Prostate gland (tissue), 2 donors: ENCODE measurements at regions of chr16 and their contacts with region 1.

Region 1: GRCh38 chr16:22190776-22191531 is 15.1 kb upstream of the EEF2K start:
- DNase-seq: peak; percentile 100
- H3K4me3 ChIP-seq: peak overlapping the region; percentile 34 to 68
- H3K27ac ChIP-seq: peak overlapping the region; percentile 96 to 98
- H3K4me1 ChIP-seq: peaks cover 12% of the 10 kb centered on the region
- H3K27me3 ChIP-seq: no peaks in the 10 kb centered on the region
- CTCF ChIP-seq: no peak
- POLR2A ChIP-seq: peak; percentile 95

Region 2: GRCh38 chr16:21523411-21524067 is 667.4 kb before region 1 on chr16:
- intact Hi-C with region 1: loop called (anchors 10 kb)
- DNase-seq: no peak
- H3K4me3 ChIP-seq: no peak overlapping the region
- H3K27ac ChIP-seq: no peak overlapping the region
- H3K4me1 ChIP-seq: no peaks in the 10 kb centered on the region
- H3K27me3 ChIP-seq: no peaks in the 10 kb centered on the region
- CTCF ChIP-seq: no peak
- POLR2A ChIP-seq: no peak

Region 3: GRCh38 chr16:22077700-22078313 is 113.1 kb before region 1 on chr16:
- intact Hi-C with region 1: loop called (anchors 2 kb)
- DNase-seq: peak; percentile 50
- H3K4me3 ChIP-seq: no peak overlapping the region
- H3K27ac ChIP-seq: no peak overlapping the region
- H3K4me1 ChIP-seq: no peaks in the 10 kb centered on the region
- H3K27me3 ChIP-seq: no peaks in the 10 kb centered on the region
- CTCF ChIP-seq: peak; percentile 33 to 84 (median 72)
- POLR2A ChIP-seq: no peak

Region 4: DNA sequence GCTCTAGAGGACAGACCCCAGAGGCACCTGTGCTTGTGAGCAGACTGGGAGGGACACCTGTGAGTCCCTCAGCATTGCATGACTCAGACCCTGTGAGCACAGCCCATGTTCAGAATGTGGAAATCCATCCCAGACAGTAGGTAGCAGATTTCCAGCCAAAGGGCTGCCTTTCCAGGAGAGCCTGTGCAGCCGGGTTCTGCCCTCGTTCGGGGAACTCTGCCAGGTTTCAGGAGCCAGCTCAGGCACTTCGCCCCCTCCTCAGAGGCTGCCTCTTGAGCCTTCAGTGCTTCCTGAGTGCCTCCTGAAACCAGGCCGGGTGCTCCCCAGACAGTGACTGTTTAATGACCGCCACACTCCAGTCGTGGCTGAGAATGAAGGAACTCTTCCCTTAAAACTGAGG is 51.9 kb before region 1 on chr16:
- intact Hi-C with region 1: no loop called
- DNase-seq: no peak
- H3K4me3 ChIP-seq: no peak overlapping the region
- H3K27ac ChIP-seq: no peak overlapping the region
- H3K4me1 ChIP-seq: no peaks in the 10 kb centered on the region
- H3K27me3 ChIP-seq: no peaks in the 10 kb centered on the region
- CTCF ChIP-seq: no peak
- POLR2A ChIP-seq: no peak

Region 5: GRCh38 chr16:22297114-22297878 is 106.3 kb after region 1 on chr16 and contains the start of gene POLR3E:
- intact Hi-C with region 1: loop called (anchors 2 kb)
- DNase-seq: peak; percentile 99
- H3K4me3 ChIP-seq: peak within 1 kb of the TSS; percentile 78 to 91
- H3K27ac ChIP-seq: peak within 1 kb of the TSS; percentile 92 to 96
- H3K4me1 ChIP-seq: peaks cover 5% of the 10 kb centered on the region
- H3K27me3 ChIP-seq: no peaks in the 10 kb centered on the region
- CTCF ChIP-seq: peak; percentile 95 to 100 (median 99)
- POLR2A ChIP-seq: peak; percentile 73
- total RNA-seq, gene POLR3E: 52.3 to 61.7 TPM

Region 6: GRCh38 chr16:22670551-22671041 is 479.6 kb after region 1 on chr16:
- intact Hi-C with region 1: loop called (anchors 10 kb)
- DNase-seq: no peak
- H3K4me3 ChIP-seq: no peak overlapping the region
- H3K27ac ChIP-seq: no peak overlapping the region
- H3K4me1 ChIP-seq: no peaks in the 10 kb centered on the region
- H3K27me3 ChIP-seq: no peaks in the 10 kb centered on the region
- CTCF ChIP-seq: no peak
- POLR2A ChIP-seq: no peak